HEK293 (cell line): ENCODE measurements at regions of chr13 and their contacts with region 1.

Region 1: DNA sequence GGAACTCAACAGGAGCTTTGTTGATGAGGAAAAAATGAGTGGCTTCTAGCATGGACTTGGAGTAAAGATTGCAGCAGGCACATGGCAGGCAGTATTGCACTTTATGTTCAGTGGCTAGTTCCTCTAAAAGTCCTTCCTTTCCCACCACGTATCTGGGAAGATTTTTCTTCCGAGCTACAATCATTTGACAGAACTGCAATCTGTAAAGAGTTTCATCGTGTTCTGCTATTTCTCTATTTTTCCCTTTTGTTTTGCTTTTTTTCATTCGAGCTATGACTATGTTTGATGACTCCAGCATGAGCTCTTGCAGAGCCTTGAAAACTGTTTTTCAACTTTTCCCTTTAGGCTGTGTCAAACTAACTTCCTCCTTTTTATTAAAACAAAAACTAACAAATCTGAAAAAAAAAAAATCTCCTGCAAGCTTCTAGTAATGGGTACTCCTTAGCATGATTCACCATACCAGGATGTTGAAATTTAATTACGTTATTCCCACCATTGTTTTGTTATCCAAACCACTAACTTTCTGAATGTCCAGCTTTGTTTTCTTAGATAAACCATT is 12.3 kb downstream of the CLDN10 start:
- H3K4me3 ChIP-seq: no peak overlapping the region
- H3K27ac ChIP-seq: no peak overlapping the region
- H3K4me1 ChIP-seq: no peaks in the 10 kb centered on the region
- CTCF ChIP-seq: no peak

Region 2: DNA sequence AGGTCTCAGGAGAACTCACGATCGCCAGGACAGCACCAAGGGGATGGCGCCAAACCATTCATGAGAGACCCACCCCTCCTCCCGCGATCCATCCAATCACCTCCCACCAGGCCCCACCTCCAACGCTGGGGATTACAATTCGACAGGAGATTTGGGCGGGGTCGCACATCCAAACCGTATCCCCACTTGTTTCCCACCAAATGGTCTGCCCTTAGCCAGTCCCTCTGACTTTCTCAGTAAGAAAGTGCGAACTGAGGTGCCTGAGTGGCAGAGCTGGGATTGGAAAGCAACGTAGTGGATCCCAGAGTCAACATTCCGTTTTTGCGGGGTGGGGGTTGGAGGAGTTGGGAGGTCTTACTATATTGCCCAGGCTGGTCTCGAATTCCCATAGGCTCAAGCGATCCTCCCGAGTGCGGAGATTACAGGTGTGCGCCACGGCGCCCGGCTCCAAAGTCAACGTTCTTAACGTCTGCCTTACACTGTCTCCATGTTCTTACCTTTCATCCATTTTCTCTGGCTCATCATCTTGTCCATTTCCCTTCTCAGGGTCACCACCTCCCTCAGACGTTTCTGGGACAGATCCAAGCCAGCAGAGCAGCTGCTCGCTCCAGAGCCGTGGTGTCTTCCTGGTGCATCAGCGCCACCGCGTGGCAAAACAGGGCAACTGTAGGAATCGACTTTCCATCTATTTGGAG is 160.8 kb before region 1 on chr13:
- CTCF ChIA-PET with region 1: interaction called, 14 read pairs
- POLR2A ChIA-PET with region 1: no interaction called
- H3K4me3 ChIP-seq: no peak overlapping the region
- H3K27ac ChIP-seq: no peak overlapping the region
- H3K4me1 ChIP-seq: no peaks in the 10 kb centered on the region
- CTCF ChIP-seq: no peak; the same call in 1 of the 2 replicates

Region 3: DNA sequence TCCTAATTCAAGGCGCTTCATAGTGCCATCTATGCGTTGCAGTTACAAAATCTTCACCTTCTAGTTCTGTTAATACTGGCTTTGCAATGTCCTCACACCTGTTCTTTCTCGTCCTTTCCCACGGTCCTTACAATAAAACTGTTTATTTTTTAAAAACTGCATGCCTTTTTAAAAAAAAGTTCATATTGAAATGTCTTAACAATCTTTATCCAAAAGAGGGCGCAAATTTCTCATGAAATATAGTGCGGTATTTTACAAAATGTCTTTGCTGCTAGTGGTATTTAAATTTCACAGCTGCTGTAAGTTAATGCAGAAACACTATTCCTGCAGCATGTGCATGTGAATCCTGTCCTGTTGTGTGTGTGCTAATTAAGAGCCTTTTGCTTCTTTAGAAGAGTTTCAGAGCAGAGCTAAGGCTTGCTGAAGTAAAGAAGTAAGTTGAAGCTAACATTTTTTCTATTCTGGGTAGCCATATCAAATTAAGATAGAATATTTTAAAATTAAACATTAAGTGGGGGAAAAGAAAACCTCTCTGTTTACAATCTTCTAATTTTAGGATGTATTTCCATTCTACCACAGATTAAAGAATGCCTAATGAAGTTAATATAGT is 28.1 kb before region 1 on chr13:
- CTCF ChIA-PET with region 1: interaction called, 31 read pairs
- POLR2A ChIA-PET with region 1: no interaction called
- H3K4me3 ChIP-seq: no peak overlapping the region
- H3K27ac ChIP-seq: no peak overlapping the region
- H3K4me1 ChIP-seq: peaks cover 2% of the 10 kb centered on the region; the same call in 1 of the 2 replicates
- CTCF ChIP-seq: no peak